A549 (cell line): ENCODE measurements at regions of chr7 and their contacts with region 1.

Region 1: GRCh38 chr7:151008511-151009323 is 15.6 kb downstream of the ATG9B start:
- DNase-seq: peak; percentile 41 to 50
- ATAC-seq: peak in 1 of 2 experiments; percentile 74; a peak in 3 of 6 replicates
- H3K4me3 ChIP-seq: no peak overlapping the region
- H3K27ac ChIP-seq: no peak overlapping the region
- H3K4me1 ChIP-seq: peaks cover 23% of the 10 kb centered on the region; the same call in 1 of the 3 replicates
- CTCF ChIP-seq: peak; percentile 41; the same call in 2 of the 3 replicates
- EP300 ChIP-seq: no peak
- POLR2A ChIP-seq: no peak
- RAD21 ChIP-seq: no peak

Region 2: DNA sequence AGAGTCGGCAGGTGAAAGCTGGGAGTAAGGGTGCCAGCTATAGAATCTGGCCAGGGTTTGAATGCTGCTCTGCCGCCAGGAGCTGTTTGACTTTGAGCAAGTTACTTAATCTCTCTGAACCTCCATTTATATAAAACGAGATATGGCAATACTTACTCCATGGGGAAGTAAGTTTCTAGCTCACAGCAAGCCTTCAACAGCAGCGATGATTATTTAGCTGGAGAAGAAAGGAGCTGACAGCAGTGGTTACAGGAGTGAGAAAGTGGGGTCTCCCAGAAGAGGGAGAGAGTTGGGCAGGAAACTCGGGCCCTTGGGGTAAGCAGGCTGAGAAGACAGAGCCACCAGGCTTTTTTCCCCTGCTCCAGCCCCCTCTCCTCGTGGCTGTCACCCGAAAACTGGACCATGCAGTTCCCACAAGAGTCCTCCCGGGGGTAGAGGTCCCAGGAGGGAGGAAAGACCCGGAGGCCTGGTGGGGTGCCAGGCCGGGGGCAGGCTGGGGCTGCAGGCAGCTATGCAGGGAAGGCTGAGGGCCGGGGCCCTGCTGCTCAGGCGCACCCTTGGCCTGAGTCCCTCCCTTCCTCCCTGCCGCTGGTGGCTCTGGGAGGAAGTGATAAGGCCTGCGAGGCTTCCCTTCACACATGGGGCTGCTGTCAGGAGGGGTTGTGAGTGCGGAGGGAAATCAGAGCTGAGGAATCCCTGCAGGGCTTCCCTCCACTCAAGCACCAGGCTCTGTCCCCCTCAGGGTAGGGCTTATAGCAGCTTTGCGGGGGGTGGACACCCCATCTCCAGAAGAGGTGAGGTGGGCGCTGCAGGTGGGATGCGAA is 14.4 kb before region 1 on chr7:
- CTCF ChIA-PET with region 1: interaction called, 11 read pairs
- POLR2A ChIA-PET with region 1: no interaction called
- DNase-seq: no peak
- ATAC-seq: peak; percentile 40 to 62; a peak in 5 of 6 replicates
- H3K4me3 ChIP-seq: no peak overlapping the region
- H3K27ac ChIP-seq: no peak overlapping the region
- H3K4me1 ChIP-seq: no peaks in the 10 kb centered on the region
- CTCF ChIP-seq: no peak
- EP300 ChIP-seq: no peak
- POLR2A ChIP-seq: no peak
- RAD21 ChIP-seq: no peak

Region 3: GRCh38 chr7:151023232-151023631 is 14.5 kb after region 1 on chr7:
- CTCF ChIA-PET with region 1: interaction called, 110 read pairs
- POLR2A ChIA-PET with region 1: no interaction called
- DNase-seq: no peak
- ATAC-seq: no peak
- H3K4me3 ChIP-seq: no peak overlapping the region
- H3K27ac ChIP-seq: no peak overlapping the region
- H3K4me1 ChIP-seq: peaks cover 17% of the 10 kb centered on the region; the same call in 2 of the 3 replicates
- CTCF ChIP-seq: no peak
- EP300 ChIP-seq: no peak
- POLR2A ChIP-seq: no peak
- RAD21 ChIP-seq: no peak